Activated T-helper 1 cell treated with anti-CD3 and anti-CD28 coated beads, Interleukin-12 subunit alpha, Interleukin-12 subunit beta, Interleukin-2, Interleukin-4 antibody, amounts not matched to agents 30 ng/mL and 10 ng/mL and 1 ng/mL, durations not matched to agents 14 hours and 24 hours and 36 hours (primary cell): ENCODE measurements at regions of chr15 and their contacts with region 1.

Region 1: GRCh38 chr15:40338041-40338657 is 2.6 kb downstream of the CCDC9B start:
- DNase-seq: peak; percentile 70
- H3K4me3 Mint-ChIP-seq: no peak overlapping the region
- H3K27ac Mint-ChIP-seq: no peak overlapping the region
- H3K4me1 Mint-ChIP-seq: peaks cover 18% of the 10 kb centered on the region
- H3K27me3 Mint-ChIP-seq: peaks cover 2% of the 10 kb centered on the region

Region 2: GRCh38 chr15:40217159-40217824 is 120.9 kb before region 1 on chr15:
- intact Hi-C with region 1: loop called (anchors 5 kb)
- DNase-seq: peak; percentile 38
- H3K4me3 Mint-ChIP-seq: no peak overlapping the region
- H3K27ac Mint-ChIP-seq: no peak overlapping the region
- H3K4me1 Mint-ChIP-seq: no peaks in the 10 kb centered on the region
- H3K27me3 Mint-ChIP-seq: no peaks in the 10 kb centered on the region

Region 3: DNA sequence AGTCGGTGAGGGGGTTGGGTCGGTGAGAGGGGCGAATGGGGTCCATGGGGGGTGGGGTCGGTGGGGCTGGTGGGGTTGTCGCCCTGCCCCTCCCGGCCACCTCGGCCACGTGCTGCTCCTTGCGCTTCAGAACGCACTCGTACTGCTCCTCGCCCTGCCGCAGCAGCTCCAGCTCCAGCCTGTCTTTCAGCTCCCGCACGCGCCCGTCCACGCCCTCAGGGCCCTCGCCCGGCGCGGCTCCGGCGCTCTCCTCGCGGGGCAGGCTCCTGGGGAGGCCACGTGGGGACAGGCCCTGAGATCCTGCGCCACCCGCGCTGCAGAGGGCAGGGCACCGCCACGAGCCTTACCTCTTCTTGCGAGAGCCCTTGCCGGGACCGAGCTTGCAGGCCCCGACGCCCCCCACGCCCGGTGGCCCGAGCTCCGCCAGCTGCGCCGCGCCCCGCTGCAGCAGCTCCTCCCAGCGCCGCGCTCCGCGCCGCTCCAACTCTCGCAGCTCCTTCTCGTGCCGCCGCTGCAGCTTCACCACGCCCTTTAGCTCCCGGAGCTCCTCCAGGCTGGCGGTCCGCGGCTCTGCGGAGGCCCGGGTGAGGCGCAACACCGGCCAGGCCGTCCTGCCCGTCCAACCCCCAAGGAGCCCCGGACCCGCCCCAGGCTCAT is 47.1 kb before region 1 on chr15:
- intact Hi-C with region 1: no loop called
- DNase-seq: no peak
- H3K4me3 Mint-ChIP-seq: no peak overlapping the region
- H3K27ac Mint-ChIP-seq: no peak overlapping the region
- H3K4me1 Mint-ChIP-seq: no peaks in the 10 kb centered on the region
- H3K27me3 Mint-ChIP-seq: no peaks in the 10 kb centered on the region

Region 4: GRCh38 chr15:40307421-40308211 is 30.5 kb before region 1 on chr15 and contains the start of gene PLCB2:
- intact Hi-C with region 1: loop called (anchors 1 kb)
- DNase-seq: peak; percentile 62
- H3K4me3 Mint-ChIP-seq: peak within 1 kb of the TSS; percentile 92
- H3K27ac Mint-ChIP-seq: peak within 1 kb of the TSS; percentile 98
- H3K4me1 Mint-ChIP-seq: peaks cover 37% of the 10 kb centered on the region
- H3K27me3 Mint-ChIP-seq: peaks cover 16% of the 10 kb centered on the region
- total RNA-seq, gene PLCB2: 88.5 and 89.0 TPM in 2 replicates